ENCODE measurements at regions of chr19 and their contacts with region 1.

Region 1: DNA sequence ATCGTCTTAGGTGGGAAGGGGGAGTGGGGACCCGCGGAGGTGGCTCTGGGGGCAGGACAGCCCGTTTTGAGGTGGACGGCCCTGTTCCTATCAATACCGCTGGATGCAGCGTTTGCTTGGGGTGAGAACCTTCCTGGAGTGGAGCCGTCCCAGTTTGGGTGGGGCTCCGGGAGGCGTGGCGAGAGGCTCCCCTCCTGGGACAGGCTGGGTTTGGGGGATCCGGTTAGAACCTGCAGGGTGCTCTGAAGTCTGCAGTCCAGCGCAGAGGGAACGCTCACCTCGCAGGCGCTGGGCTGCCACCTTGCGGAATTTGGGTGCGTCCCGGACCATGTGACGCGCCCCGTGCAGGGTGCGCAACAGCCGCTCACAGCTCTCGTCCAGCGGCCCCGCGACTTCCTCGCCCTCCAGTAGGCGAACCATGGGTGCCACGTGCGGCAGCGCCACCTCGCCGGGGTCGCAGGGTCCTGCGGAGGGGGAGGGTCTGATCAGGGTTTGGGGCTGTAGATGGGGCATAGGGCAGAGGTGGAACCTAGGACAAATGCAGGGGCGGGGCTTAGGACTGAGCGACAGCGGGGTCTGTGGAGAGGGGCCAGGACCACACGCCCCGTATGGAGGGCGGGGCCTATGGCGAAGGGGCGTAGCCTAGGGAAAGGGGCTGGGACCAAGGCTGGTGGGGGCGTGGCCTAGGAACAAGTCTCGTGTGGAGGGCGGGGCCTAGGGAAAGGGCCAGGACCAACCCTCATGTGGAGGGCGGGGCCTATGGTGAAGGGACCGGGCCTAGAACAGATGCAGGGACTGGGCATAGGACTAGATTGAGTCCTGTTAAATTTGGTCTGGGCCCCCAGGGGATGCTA is 13.8 kb downstream of the SH2D3A start:
- DNase-seq: peak; percentile 91
- ATAC-seq: peak; percentile 94
- H3K4me3 ChIP-seq: peak overlapping the region; percentile 30
- H3K27ac ChIP-seq: peak overlapping the region; percentile 40
- H3K4me1 ChIP-seq: no peaks in the 10 kb centered on the region
- H3K27me3 ChIP-seq: no peaks in the 10 kb centered on the region
- CTCF ChIP-seq: peak; percentile 41

Region 2: DNA sequence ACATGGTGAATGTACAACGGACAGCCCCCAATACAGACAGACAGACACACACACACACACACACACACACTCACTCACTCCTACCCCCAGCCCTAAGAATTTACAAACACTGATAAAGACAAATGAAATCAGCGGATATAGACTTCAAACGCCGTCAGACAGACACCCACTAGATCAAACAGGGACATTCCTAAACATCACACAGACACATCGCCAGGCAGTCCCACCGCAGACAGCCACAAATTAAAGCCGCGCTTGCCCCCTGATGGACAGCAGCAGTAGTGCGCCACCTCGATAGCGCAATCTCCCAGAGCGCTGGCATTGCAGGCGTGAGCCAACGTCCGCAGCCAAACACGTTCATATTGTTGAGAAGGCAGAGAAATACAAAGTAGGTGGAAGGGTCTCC is 109.3 kb after region 1 on chr19:
- intact Hi-C with region 1: loop called (anchors 10 kb)
- DNase-seq: peak; percentile 91
- ATAC-seq: peak; percentile 94
- H3K4me3 ChIP-seq: peak overlapping the region; percentile 33
- H3K27ac ChIP-seq: no peak overlapping the region
- H3K4me1 ChIP-seq: peaks cover 6% of the 10 kb centered on the region
- H3K27me3 ChIP-seq: no peaks in the 10 kb centered on the region
- CTCF ChIP-seq: peak; percentile 90